ENCODE measurements at regions of chr15 and their contacts with region 1.

Region 1: DNA sequence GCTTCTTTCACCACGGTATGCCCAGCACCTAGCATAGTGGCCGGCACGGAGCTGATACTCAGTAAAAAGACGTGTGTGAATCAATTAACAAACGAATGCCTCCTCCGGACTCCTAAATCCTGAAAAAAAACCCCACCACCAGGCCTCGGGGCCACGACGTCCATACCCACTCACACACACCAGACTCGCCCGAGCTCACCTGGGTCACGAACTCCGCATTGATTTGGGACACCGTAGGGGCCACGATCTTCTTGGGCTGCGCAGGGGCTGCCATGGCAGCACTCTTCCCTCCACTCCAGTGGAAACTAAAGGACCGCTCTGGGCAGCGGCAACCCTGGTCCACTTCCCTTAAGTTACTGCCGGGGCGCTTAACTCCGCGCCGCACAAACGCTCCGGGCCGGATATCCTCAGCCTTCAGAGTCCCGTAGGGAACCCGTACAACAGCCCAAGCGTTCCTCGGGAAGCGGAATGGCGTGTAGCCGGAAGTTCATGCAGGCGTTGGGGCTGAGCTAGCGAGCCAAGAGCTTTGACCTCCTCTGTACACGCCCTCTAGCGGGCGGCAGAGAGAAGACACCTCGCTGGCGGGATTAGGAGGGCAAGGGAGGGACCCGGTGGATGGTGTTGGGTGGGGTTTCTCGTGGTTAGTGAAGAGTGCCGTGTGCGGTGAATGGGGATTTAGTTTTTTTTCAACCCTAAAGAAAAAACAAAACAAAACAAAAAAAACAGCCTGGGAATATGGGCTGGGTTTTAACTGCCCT is at the start of gene AQR:
- DNase-seq: peak; percentile 86 to 94 (median 89)
- H3K4me3 ChIP-seq: peak within 1 kb of the TSS; percentile 96
- H3K4me3 Mint-ChIP-seq: peak within 1 kb of the TSS; percentile 97 to 100 (median 99)
- H3K27ac ChIP-seq: peak within 1 kb of the TSS; percentile 88
- H3K27ac Mint-ChIP-seq: peak within 1 kb of the TSS; percentile 83 to 99 (median 96)
- H3K4me1 ChIP-seq: peaks cover 25% of the 10 kb centered on the region
- H3K4me1 Mint-ChIP-seq: peaks cover 46 to 55% (median 54%) of the 10 kb centered on the region in 3 donors
- H3K27me3 ChIP-seq: no peaks in the 10 kb centered on the region
- H3K27me3 Mint-ChIP-seq: no peaks in the 10 kb centered on the region
- total RNA-seq, gene AQR: 41.7 to 46.0 TPM

Region 2: GRCh38 chr15:34795267-34796081 is 174.0 kb before region 1 on chr15 and contains the start of gene ACTC1:
- CTCF ChIA-PET with region 1: no interaction called
- POLR2A ChIA-PET with region 1: no interaction called
- DNase-seq: no peak
- H3K4me3 ChIP-seq: no peak within 1 kb of the TSS
- H3K4me3 Mint-ChIP-seq: no peak within 1 kb of the TSS
- H3K27ac ChIP-seq: no peak within 1 kb of the TSS
- H3K27ac Mint-ChIP-seq: no peak within 1 kb of the TSS
- H3K4me1 ChIP-seq: no peaks in the 10 kb centered on the region
- H3K4me1 Mint-ChIP-seq: peaks cover 0 to 3% (median 0%) of the 10 kb centered on the region in 3 donors
- H3K27me3 ChIP-seq: no peaks in the 10 kb centered on the region
- H3K27me3 Mint-ChIP-seq: peaks cover 21 to 77% of the 10 kb centered on the region in 2 donors
- total RNA-seq, gene ACTC1: not detected

Region 3: DNA sequence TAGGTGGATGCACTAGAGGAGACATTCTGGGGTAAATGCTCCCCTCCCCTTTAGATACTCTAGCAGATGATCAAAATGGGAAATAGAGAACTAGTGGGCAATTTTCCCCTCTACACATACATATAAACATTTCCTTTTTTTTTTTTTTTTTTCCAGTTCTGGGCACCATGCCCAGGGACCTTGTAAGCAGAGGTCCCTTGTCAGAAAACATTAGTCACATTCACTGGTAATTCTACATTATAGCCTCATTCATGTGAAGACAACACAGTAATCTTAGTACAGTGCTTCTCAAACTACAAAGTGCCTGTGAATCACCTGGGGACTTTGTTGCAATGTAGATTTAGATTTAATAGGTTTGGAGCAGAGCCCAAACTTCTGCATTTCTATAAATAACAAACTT is 114.1 kb before region 1 on chr15:
- CTCF ChIA-PET with region 1: no interaction called
- POLR2A ChIA-PET with region 1: no interaction called
- DNase-seq: no peak
- H3K4me3 ChIP-seq: no peak overlapping the region
- H3K4me3 Mint-ChIP-seq: no peak overlapping the region
- H3K27ac ChIP-seq: no peak overlapping the region
- H3K27ac Mint-ChIP-seq: peak overlapping the region in 2 of 8 donors; percentile 26 to 52
- H3K4me1 ChIP-seq: no peaks in the 10 kb centered on the region
- H3K4me1 Mint-ChIP-seq: no peaks in the 10 kb centered on the region
- H3K27me3 ChIP-seq: no peaks in the 10 kb centered on the region
- H3K27me3 Mint-ChIP-seq: no peaks in the 10 kb centered on the region

Region 4: GRCh38 chr15:34896185-34896584 is 73.3 kb before region 1 on chr15:
- CTCF ChIA-PET with region 1: no interaction called
- POLR2A ChIA-PET with region 1: no interaction called
- DNase-seq: no peak
- H3K4me3 ChIP-seq: no peak overlapping the region
- H3K4me3 Mint-ChIP-seq: no peak overlapping the region
- H3K27ac ChIP-seq: no peak overlapping the region
- H3K27ac Mint-ChIP-seq: peak overlapping the region in 1 of 8 donors; percentile 50
- H3K4me1 ChIP-seq: no peaks in the 10 kb centered on the region
- H3K4me1 Mint-ChIP-seq: peaks cover 0 to 5% (median 2%) of the 10 kb centered on the region in 3 donors
- H3K27me3 ChIP-seq: no peaks in the 10 kb centered on the region
- H3K27me3 Mint-ChIP-seq: no peaks in the 10 kb centered on the region

Region 5: DNA sequence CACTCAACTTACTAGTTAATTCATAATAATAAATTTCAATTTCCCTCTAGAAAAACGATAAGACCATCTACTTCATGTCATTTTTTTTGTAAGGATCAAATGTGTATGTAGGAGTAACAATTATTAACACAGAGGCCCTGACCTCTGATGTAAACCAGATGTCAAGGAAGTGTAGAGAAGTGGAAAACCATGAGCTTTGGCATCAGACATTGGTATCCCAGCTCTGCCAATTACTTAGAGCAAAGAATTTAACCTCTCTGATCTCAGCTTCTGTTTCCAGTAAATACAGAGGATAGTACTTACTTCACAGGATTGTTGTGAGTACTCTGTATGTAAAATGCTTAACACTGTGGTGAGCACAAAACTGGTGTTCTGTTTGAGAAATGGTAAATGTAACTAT is 17.5 kb before region 1 on chr15:
- CTCF ChIA-PET with region 1: interaction called, 11 read pairs
- POLR2A ChIA-PET with region 1: no interaction called
- DNase-seq: no peak
- H3K4me3 ChIP-seq: no peak overlapping the region
- H3K4me3 Mint-ChIP-seq: no peak overlapping the region
- H3K27ac ChIP-seq: no peak overlapping the region
- H3K27ac Mint-ChIP-seq: peak overlapping the region in 1 of 8 donors; percentile 35
- H3K4me1 ChIP-seq: no peaks in the 10 kb centered on the region
- H3K4me1 Mint-ChIP-seq: peaks cover 5 to 20% (median 11%) of the 10 kb centered on the region in 3 donors
- H3K27me3 ChIP-seq: no peaks in the 10 kb centered on the region
- H3K27me3 Mint-ChIP-seq: no peaks in the 10 kb centered on the region

Region 6: GRCh38 chr15:34987985-34988873 is 18.7 kb after region 1 on chr15 and contains the start of gene ZNF770:
- CTCF ChIA-PET with region 1: interaction called, 77 read pairs
- POLR2A ChIA-PET with region 1: interaction called, 71 read pairs
- DNase-seq: peak; percentile 69 to 86 (median 83)
- H3K4me3 ChIP-seq: peak within 1 kb of the TSS; percentile 97
- H3K4me3 Mint-ChIP-seq: peak within 1 kb of the TSS; percentile 96 to 100 (median 99)
- H3K27ac ChIP-seq: peak within 1 kb of the TSS; percentile 98
- H3K27ac Mint-ChIP-seq: peak within 1 kb of the TSS; percentile 98 to 100 (median 99)
- H3K4me1 ChIP-seq: peaks cover 23% of the 10 kb centered on the region
- H3K4me1 Mint-ChIP-seq: peaks cover 37 to 57% (median 55%) of the 10 kb centered on the region in 3 donors
- H3K27me3 ChIP-seq: no peaks in the 10 kb centered on the region
- H3K27me3 Mint-ChIP-seq: peaks cover 0 to under 1% of the 10 kb centered on the region in 2 donors
- total RNA-seq, gene ZNF770: 63.6 to 68.0 TPM

Region 7: DNA sequence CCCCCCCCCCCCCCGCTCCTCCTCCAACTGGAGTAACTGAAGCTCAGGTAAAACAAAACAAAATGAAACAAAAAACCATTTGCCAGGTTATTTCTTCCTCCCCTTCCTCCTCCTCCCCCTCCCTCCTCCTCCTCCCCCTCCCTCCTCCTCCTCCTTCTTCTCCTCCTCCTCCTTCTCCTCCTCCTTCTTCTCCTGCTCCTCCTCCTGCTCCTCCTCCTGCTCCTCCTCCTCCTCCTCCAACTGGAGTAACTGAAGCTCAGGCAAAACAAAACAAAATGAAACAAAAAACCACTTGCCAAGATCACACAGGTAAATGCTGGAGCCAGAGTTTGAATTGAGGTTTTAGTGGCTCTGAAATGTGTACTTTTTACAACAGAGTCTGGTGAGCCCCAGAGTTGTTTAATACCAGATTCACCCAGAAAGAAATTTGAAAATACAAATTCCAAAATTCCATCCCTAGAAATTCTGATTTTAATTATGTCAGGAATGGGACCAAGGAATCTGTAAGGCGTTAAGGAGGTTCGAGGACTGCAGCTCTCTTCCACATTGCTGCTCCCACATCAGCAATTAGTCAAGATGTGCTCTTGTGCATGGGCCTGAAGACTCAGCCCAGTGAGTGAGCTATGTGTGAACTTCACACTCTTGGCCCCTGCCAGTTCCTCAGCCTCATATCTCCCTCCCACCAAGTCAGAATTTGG is 50.0 kb after region 1 on chr15:
- CTCF ChIA-PET with region 1: no interaction called
- POLR2A ChIA-PET with region 1: no interaction called
- DNase-seq: no peak
- H3K4me3 ChIP-seq: no peak overlapping the region
- H3K4me3 Mint-ChIP-seq: no peak overlapping the region
- H3K27ac ChIP-seq: no peak overlapping the region
- H3K27ac Mint-ChIP-seq: no peak overlapping the region
- H3K4me1 ChIP-seq: no peaks in the 10 kb centered on the region
- H3K4me1 Mint-ChIP-seq: peaks cover 2 to 4% (median 3%) of the 10 kb centered on the region in 3 donors
- H3K27me3 ChIP-seq: no peaks in the 10 kb centered on the region
- H3K27me3 Mint-ChIP-seq: peaks cover 0 to 6% of the 10 kb centered on the region in 2 donors